Right ventricle myocardium superior (tissue), 1 donor: ENCODE measurements at regions of chr15 and their contacts with region 1.

Region 1: DNA sequence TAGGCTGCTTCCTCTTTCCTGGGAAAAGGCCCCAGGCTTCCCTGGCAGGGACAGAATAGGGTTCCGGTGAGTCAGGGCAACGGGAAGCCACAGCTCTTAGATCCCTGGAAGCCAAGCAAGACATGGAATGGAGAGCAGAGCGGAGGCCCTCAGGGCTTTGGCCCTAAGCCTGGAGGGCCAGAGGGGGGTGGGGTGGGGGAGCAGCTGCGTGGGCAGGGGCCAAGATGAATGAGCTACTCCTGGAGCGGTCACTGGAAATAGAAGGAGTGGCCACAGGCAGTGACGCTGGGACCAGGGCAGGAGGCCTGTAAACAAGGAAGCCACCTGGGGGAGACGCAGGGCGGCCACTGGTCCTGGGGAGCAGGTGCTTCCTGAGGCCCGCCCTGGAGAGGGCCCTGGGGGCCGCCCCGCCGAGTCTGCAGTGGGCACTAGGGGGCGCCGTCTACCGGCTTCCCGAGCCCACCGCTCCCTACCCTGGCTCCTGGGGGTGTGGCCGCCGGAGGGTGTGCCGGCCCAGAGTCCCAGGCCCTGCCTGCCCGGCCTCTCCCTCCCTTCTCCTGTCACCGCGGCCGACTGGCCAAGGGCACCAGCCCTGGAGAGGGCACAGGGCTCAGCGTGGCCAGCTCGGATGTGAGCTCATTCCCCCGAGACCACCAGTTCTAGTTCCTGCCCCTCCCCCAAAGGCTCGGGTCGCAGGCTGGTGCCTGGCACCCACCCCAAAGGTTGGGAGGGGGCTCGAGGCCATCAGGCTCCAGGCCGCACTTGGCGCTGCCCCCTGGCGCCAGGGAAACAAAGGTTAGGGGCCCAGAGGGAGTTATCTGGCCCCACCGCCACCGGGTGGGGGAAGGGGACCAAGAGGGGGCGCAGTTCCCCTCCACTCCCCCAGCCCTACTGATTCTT is 12.1 kb downstream of the VPS18 start:
- DNase-seq: peak; percentile 91
- ATAC-seq: peak; percentile 84

Region 2: GRCh38 chr15:40941528-40942336 is 35.4 kb after region 1 on chr15:
- intact Hi-C with region 1: loop called (anchors 5 kb)
- DNase-seq: peak; percentile 88
- ATAC-seq: peak; percentile 86

Region 3: DNA sequence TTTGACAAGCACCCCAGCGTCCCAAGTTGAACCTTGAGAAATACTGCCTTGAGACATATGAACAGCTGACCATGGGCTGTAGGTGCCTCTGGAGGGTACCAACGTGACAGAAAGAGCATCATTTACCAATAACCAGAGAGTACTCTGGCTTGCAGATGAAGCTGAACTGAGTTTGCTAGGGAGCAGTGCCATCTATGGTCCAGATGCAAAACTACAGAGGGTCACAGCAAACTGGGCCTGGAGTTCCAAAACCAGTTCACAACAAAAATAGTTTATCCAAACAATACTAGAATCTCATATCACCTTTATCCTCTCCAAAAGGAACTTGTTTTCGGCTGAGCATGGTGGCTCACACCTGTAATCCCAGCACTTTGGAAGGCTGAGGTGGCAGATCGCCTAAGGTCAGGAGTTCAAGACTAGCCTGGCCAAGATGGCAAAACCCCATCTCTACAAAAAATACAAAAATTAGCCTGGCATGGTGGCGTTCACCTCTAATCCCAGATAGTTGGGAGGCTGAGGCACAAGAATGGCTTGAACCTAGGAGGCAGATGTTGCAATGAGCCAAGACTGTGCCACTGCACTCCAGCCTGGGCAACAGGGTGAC is 116.2 kb after region 1 on chr15:
- intact Hi-C with region 1: loop called (anchors 2 kb)
- DNase-seq: no peak
- ATAC-seq: peak; percentile 65

Region 4: GRCh38 chr15:41180206-41180789 is 274.0 kb after region 1 on chr15:
- intact Hi-C with region 1: loop called (anchors 5 kb)
- DNase-seq: no peak
- ATAC-seq: no peak